Endothelial cell of umbilical vein (primary cell): ENCODE measurements at regions of chr6 and their contacts with region 1.

Region 1: GRCh38 chr6:43013843-43014433 is at the starts of genes KLHDC3 and MEA1:
- DNase-seq: peak; percentile 100
- H3K4me3 ChIP-seq: peak within 1 kb of the TSS; percentile 58 to 87 (median 72)
- H3K27ac ChIP-seq: peak within 1 kb of the TSS; percentile 52
- H3K4me1 ChIP-seq: peaks cover 17% of the 10 kb centered on the region
- H3K27me3 ChIP-seq: no peaks in the 10 kb centered on the region
- CTCF ChIP-seq: no peak
- POLR2A ChIP-seq: no peak
- total RNA-seq, gene KLHDC3: 84.6 and 84.8 TPM in 2 replicates
- total RNA-seq, gene MEA1: 55.6 and 62.5 TPM in 2 replicates

Region 2: DNA sequence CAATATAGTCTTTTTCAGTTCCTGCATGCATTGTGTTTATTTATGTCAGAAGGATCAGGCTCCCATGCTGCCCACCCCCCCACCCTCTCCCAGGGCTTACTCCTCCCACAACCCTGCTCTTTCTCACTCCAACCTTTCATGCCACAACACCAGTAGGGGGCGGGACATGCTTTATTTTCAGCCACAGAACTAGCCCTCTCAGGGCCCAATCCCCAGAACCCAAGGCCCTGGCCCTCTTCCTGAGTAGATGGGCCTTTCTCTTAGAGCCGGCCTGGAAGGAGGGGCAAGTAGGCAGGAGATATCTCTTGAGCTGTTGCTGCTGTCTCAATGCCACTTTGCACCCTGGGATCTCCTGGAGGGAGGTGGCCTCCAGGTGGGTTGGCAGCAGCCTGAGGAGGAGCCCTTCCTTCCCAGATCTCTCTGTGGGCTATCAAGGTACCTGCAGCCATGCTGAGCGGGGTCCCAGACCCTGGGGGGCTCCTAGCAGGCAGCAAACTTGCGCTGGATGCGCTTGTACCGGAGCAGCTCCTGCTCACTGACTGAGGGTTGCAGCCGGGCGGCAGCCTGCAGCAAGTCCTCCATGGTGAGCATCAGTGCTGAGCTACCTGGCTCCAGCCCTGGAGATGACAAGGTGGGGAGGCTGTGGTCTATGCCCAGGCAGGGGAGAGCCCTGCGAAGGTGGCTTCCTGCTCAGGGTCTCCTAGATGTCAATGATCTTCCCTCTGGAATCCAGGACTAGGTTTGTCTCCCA is 49.9 kb before region 1 on chr6:
- CTCF ChIA-PET with region 1: interaction called, 5 read pairs
- POLR2A ChIA-PET with region 1: no interaction called
- dilution Hi-C with region 1: no loop called
- intact Hi-C with region 1: loop called (anchors 5 kb)
- DNase-seq: peak; percentile 50
- H3K4me3 ChIP-seq: no peak overlapping the region
- H3K27ac ChIP-seq: no peak overlapping the region
- H3K4me1 ChIP-seq: peaks cover 10% of the 10 kb centered on the region
- H3K27me3 ChIP-seq: no peaks in the 10 kb centered on the region
- CTCF ChIP-seq: peak; percentile 8 to 31
- POLR2A ChIP-seq: no peak

Region 3: GRCh38 chr6:42984001-42984923 is 29.7 kb before region 1 on chr6 and contains the start of gene PPP2R5D:
- CTCF ChIA-PET with region 1: interaction called, 3 read pairs
- POLR2A ChIA-PET with region 1: interaction called, 6 read pairs
- dilution Hi-C with region 1: no loop called
- intact Hi-C with region 1: loop called (anchors 1 kb)
- DNase-seq: peak; percentile 99
- H3K4me3 ChIP-seq: peak within 1 kb of the TSS; percentile 57 to 90 (median 83)
- H3K27ac ChIP-seq: no peak within 1 kb of the TSS
- H3K4me1 ChIP-seq: peaks cover 35% of the 10 kb centered on the region
- H3K27me3 ChIP-seq: no peaks in the 10 kb centered on the region
- CTCF ChIP-seq: no peak
- POLR2A ChIP-seq: peak; percentile 66
- total RNA-seq, gene PPP2R5D: 45.5 and 51.0 TPM in 2 replicates

Region 4: DNA sequence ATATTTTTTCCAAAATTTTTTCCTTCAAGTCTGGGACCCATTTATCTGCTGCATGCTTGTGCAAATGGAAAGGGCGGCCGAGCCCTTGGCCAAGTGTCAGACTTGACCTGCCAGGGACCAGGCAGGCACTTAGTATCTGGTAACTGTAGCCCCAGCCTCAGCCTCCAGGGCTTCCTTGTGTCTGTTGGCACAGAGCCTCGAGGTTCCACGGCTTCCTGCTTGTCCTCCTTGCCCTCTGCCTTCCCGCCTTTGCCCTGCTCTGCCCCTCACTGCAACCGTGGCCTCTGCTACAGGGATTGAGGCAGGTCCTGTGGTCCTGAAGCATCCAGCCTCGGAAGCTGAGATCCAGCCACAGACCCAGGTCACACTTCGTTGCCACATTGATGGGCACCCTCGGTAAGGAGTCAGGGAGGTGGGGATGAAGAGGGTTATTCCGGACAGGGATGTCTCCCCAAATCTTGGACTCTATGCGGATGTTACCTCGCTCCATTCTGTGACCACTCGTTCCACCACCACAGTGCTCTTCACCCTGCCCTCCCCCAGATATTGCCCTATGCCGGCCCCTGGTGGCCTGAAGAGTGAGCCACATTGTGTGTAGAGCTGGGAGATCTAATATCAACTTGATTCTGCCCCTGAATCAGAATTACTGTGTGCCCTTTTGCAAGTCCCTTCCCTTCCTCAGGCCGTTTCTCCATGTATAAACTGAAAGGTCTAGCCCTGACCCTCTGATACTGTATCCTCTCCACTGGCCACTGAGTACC is 115.7 kb after region 1 on chr6:
- CTCF ChIA-PET with region 1: interaction called, 6 read pairs
- POLR2A ChIA-PET with region 1: no interaction called
- dilution Hi-C with region 1: no loop called
- intact Hi-C with region 1: loop called (anchors 5 kb)
- DNase-seq: peak; percentile 33
- H3K4me3 ChIP-seq: no peak overlapping the region
- H3K27ac ChIP-seq: no peak overlapping the region
- H3K4me1 ChIP-seq: no peaks in the 10 kb centered on the region
- H3K27me3 ChIP-seq: no peaks in the 10 kb centered on the region
- CTCF ChIP-seq: peak; percentile 46 to 56
- POLR2A ChIP-seq: no peak